B cell (primary cell): ENCODE measurements at regions of chr3 and their contacts with region 1.

Region 1: GRCh38 chr3:48472915-48473616 is 26.5 kb downstream of the ATRIP start:
- DNase-seq: peak; percentile 98
- ATAC-seq: peak; percentile 91
- H3K4me3 ChIP-seq: peak overlapping the region; percentile 59 to 95 (median 74)
- H3K4me3 Mint-ChIP-seq: peak overlapping the region; percentile 93
- H3K27ac ChIP-seq: peak overlapping the region; percentile 96 to 99
- H3K27ac Mint-ChIP-seq: peak overlapping the region; percentile 99
- H3K4me1 ChIP-seq: peaks cover 62 to 76% of the 10 kb centered on the region in 2 donors
- H3K4me1 Mint-ChIP-seq: peaks cover 66% of the 10 kb centered on the region
- H3K27me3 ChIP-seq: no peaks in the 10 kb centered on the region
- H3K27me3 Mint-ChIP-seq: no peaks in the 10 kb centered on the region
- CTCF ChIP-seq: peak; percentile 56

Region 2: GRCh38 chr3:48232734-48233133 is 240.3 kb before region 1 on chr3:
- CTCF ChIA-PET with region 1: no interaction called
- POLR2A ChIA-PET with region 1: interaction called, 12 read pairs
- intact Hi-C with region 1: no loop called
- DNase-seq: peak; percentile 74
- ATAC-seq: peak; percentile 99
- H3K4me3 ChIP-seq: peak overlapping the region in 1 of 5 experiments; percentile 33
- H3K4me3 Mint-ChIP-seq: peak overlapping the region; percentile 56
- H3K27ac ChIP-seq: no peak overlapping the region
- H3K27ac Mint-ChIP-seq: peak overlapping the region; percentile 42
- H3K4me1 ChIP-seq: peaks cover 14 to 27% of the 10 kb centered on the region in 2 donors
- H3K4me1 Mint-ChIP-seq: peaks cover 29% of the 10 kb centered on the region
- H3K27me3 ChIP-seq: no peaks in the 10 kb centered on the region
- H3K27me3 Mint-ChIP-seq: no peaks in the 10 kb centered on the region
- CTCF ChIP-seq: peak; percentile 68

Region 3: GRCh38 chr3:48446425-48447193 is 26.5 kb before region 1 on chr3 and contains the start of gene ATRIP:
- CTCF ChIA-PET with region 1: no interaction called
- POLR2A ChIA-PET with region 1: interaction called, 3 read pairs
- intact Hi-C with region 1: loop called (anchors 2 kb)
- DNase-seq: peak; percentile 89
- ATAC-seq: peak; percentile 99
- H3K4me3 ChIP-seq: peak within 1 kb of the TSS; percentile 50 to 82 (median 73)
- H3K4me3 Mint-ChIP-seq: peak within 1 kb of the TSS; percentile 91
- H3K27ac ChIP-seq: peak within 1 kb of the TSS; percentile 37 to 69
- H3K27ac Mint-ChIP-seq: peak within 1 kb of the TSS; percentile 91
- H3K4me1 ChIP-seq: peaks cover 20 to 27% of the 10 kb centered on the region in 2 donors
- H3K4me1 Mint-ChIP-seq: peaks cover 37% of the 10 kb centered on the region
- H3K27me3 ChIP-seq: no peaks in the 10 kb centered on the region
- H3K27me3 Mint-ChIP-seq: no peaks in the 10 kb centered on the region
- CTCF ChIP-seq: no peak
- total RNA-seq, gene ATRIP: 11.6 and 14.3 TPM in 2 replicates

Region 4: DNA sequence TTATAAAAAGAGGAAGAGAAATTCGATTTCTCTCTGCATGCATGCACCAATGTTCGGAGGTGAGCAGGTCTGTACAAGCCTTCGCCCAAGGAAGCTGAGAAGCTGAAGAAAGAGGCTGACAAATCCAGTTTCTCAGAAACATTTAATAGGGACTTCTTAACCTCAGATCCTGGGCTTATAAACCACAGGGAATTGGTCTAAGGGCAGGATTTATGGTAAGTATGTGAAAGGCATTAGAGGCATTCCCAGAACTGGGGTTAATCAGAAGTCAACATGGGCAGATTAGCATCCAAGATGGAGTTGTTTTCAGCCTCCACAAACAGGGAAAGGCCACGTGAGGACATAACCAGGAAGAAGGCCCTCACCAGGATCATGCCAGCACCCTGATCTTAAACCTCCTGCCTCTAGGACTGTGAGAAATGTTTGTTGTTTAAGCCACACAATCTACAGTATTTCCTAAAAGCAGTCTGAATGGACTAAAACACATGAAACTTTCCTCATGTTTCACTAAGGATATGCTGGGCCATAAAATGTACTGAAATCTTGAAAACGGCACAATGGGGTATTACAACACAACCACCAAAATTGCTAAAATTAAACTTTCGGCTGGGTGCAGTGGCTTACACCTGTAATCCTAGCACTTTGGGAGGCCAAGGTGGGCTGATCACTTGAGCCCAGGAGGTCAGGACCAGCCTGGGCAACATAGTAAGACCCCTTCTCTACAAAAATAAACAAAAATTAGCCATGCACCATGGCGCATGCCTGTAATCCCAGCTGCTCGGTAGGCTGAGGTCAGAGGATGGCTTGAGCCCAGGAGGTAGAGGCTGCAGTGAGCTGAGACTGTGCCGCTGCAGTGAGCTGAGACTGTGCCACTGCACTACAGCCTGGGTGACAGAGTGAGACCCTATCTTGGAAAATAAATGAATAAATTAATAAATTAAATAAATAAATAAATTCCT is 19.8 kb after region 1 on chr3:
- CTCF ChIA-PET with region 1: interaction called, 6 read pairs
- POLR2A ChIA-PET with region 1: interaction called, 5 read pairs
- intact Hi-C with region 1: loop called (anchors 1 kb)
- DNase-seq: no peak
- ATAC-seq: peak; percentile 95
- H3K4me3 ChIP-seq: no peak overlapping the region
- H3K4me3 Mint-ChIP-seq: peak overlapping the region; percentile 14
- H3K27ac ChIP-seq: no peak overlapping the region
- H3K27ac Mint-ChIP-seq: peak overlapping the region; percentile 22
- H3K4me1 ChIP-seq: peaks cover 0 to 12% of the 10 kb centered on the region in 2 donors
- H3K4me1 Mint-ChIP-seq: peaks cover 15% of the 10 kb centered on the region
- H3K27me3 ChIP-seq: no peaks in the 10 kb centered on the region
- H3K27me3 Mint-ChIP-seq: no peaks in the 10 kb centered on the region
- CTCF ChIP-seq: no peak

Region 5: DNA sequence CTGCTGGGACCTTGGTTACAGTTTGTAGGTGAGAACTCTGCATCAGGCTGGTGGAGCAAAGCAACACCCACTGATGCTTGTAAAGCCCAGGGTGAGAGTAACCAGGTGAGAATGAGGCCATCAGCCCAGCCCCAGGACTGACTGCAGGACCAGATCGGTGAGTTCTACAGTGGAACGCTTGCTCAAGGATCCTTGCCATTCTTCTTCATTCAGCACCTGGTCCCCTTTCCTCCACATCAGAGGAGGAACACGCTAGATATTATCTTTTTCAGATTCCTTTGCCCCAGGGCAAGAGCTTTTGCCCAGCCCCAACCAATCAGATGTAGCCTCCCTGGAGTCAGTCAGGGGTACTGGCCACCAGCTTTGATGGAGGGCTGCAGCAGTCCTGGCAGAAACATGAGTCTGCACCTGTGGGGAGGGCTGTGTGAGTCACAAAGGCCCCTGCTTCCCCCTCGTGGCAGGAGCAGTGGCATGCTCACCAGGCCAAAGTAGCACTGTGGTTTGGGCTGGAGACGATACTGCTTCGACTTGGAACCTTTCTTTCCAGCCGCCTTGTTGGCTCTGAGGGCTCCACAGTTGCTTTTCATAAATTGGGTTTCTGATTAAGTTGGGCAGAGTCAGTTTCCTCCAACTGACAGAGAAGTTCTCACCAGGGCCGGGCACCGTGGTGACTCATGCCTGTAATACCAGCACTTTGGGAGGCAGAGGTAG is 34.4 kb after region 1 on chr3:
- CTCF ChIA-PET with region 1: interaction called, 240 read pairs
- POLR2A ChIA-PET with region 1: interaction called, 6 read pairs
- intact Hi-C with region 1: loop called (anchors 1 kb)
- DNase-seq: peak; percentile 83
- ATAC-seq: peak; percentile 87
- H3K4me3 ChIP-seq: no peak overlapping the region
- H3K4me3 Mint-ChIP-seq: peak overlapping the region; percentile 32
- H3K27ac ChIP-seq: no peak overlapping the region
- H3K27ac Mint-ChIP-seq: peak overlapping the region; percentile 65
- H3K4me1 ChIP-seq: peaks cover 14 to 25% of the 10 kb centered on the region in 2 donors
- H3K4me1 Mint-ChIP-seq: peaks cover 23% of the 10 kb centered on the region
- H3K27me3 ChIP-seq: peaks cover 0 to 2% (median 0%) of the 10 kb centered on the region in 4 experiments
- H3K27me3 Mint-ChIP-seq: peaks cover 3% of the 10 kb centered on the region
- CTCF ChIP-seq: peak; percentile 84

Region 6: DNA sequence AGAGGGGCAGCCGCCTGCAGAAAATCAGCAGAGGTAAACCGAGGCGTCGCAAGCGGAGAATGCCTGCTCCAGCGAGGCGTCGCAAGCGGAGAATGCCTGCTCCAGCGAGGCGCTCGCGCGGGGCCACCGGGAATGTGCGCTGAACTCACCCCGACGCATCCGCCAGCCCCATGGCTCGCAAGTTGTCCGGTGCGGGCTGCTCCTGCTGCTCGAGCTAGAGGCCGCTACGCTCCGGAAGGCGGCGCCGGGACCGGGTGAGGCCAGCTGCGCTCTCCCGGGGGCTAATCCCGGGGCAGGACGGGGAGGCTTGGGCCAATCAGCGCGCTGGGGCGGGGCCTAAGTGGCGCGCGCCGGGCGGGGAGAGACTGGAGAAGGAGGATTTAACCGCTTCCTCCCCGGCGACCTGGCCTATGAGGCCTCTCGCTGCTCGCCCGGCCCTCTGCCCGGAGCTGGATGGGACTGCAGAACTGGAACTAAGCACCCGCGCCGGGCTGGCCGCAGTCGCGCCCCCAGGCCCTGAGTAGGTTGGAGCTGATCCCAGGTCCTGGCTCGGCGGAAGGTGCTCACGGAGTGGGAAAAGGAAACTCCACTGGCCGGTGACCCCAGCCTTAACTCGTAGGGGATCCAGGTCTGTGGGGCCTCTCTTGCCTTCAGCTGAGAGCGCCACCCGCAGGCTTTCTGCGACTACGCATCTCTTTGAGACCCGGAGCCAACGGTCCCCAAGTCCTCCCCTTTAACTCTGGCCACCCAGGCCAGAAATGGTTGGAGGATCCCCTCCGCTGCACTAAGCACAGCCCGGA is 162.4 kb after region 1 on chr3 and contains the start of gene SLC26A6:
- CTCF ChIA-PET with region 1: no interaction called
- POLR2A ChIA-PET with region 1: no interaction called
- intact Hi-C with region 1: loop called (anchors 2 kb)
- DNase-seq: peak; percentile 89
- ATAC-seq: peak; percentile 98
- H3K4me3 ChIP-seq: peak within 1 kb of the TSS; percentile 48 to 84 (median 77)
- H3K4me3 Mint-ChIP-seq: peak within 1 kb of the TSS; percentile 89
- H3K27ac ChIP-seq: peak within 1 kb of the TSS in 1 of 2 donors; percentile 49
- H3K27ac Mint-ChIP-seq: peak within 1 kb of the TSS; percentile 61
- H3K4me1 ChIP-seq: peaks cover 11 to 17% of the 10 kb centered on the region in 2 donors
- H3K4me1 Mint-ChIP-seq: peaks cover 13% of the 10 kb centered on the region
- H3K27me3 ChIP-seq: no peaks in the 10 kb centered on the region
- H3K27me3 Mint-ChIP-seq: no peaks in the 10 kb centered on the region
- CTCF ChIP-seq: peak; percentile 28
- total RNA-seq, gene SLC26A6: 26.7 and 30.6 TPM in 2 replicates

Region 7: GRCh38 chr3:49120438-49121131 is 647.5 kb after region 1 on chr3 and contains the start of gene USP19:
- CTCF ChIA-PET with region 1: no interaction called
- POLR2A ChIA-PET with region 1: interaction called, 12 read pairs
- intact Hi-C with region 1: no loop called
- DNase-seq: peak; percentile 97
- ATAC-seq: peak; percentile 95
- H3K4me3 ChIP-seq: peak within 1 kb of the TSS; percentile 67 to 85 (median 74)
- H3K4me3 Mint-ChIP-seq: peak within 1 kb of the TSS; percentile 88
- H3K27ac ChIP-seq: peak within 1 kb of the TSS; percentile 82 to 92
- H3K27ac Mint-ChIP-seq: peak within 1 kb of the TSS; percentile 89
- H3K4me1 ChIP-seq: peaks cover 12 to 21% of the 10 kb centered on the region in 2 donors
- H3K4me1 Mint-ChIP-seq: peaks cover 15% of the 10 kb centered on the region
- H3K27me3 ChIP-seq: no peaks in the 10 kb centered on the region
- H3K27me3 Mint-ChIP-seq: no peaks in the 10 kb centered on the region
- CTCF ChIP-seq: no peak
- total RNA-seq, gene USP19: 87.3 and 89.9 TPM in 2 replicates